ENCODE measurements at regions of chr1 and their contacts with region 1.

Region 1: GRCh38 chr1:11907275-11908094 is 18.7 kb downstream of the KIAA2013 start:
- DNase-seq: peak; percentile 94
- ATAC-seq: peak; percentile 47
- H3K4me3 Mint-ChIP-seq: peak overlapping the region; percentile 81
- H3K27ac Mint-ChIP-seq: peak overlapping the region; percentile 100
- H3K4me1 Mint-ChIP-seq: peaks cover 56% of the 10 kb centered on the region
- H3K27me3 Mint-ChIP-seq: peaks cover 5% of the 10 kb centered on the region

Region 2: DNA sequence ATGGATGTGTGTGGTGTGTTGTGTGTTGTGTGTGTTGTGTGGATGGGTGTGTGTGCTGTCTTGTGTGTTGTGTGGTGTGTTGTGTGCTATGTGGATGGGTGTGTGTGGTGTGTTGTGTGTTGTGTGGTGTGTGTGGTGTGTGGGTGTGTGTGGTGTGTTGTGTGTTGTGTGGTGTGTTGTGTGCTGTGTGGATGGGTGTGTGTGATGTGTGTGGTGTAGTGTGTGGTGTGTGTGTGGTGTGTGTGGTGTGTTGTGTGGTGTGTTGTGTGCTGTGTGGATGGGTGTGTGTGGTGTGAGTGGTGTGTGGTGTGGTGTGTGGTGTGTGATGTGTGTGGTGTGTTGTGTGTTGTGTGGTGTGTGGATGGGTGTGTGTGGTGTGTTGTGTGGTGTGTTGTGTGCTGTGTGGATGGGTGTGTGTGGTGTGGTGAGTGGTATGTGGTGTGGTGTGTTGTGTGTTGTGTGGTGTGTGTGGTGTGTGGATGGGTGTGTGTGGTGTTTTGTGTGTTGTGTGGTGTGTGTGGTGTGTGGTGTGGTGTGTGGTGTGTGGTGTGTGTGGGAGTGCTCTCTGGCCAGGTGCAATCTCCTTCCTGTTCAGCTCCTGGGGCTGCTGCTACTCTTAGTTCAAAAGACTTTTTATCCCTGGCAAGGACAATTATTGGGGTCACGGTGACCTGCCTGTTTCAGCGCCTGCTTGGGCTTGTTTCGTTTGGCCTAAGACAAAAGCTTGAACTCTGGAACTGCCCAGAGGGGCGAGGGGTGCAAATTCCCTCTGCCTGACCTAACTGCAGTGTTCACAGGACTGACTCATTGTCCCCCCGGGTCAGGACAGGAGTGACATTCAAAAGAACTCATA is 533.4 kb before region 1 on chr1:
- CTCF ChIA-PET with region 1: no interaction called
- POLR2A ChIA-PET with region 1: no interaction called
- DNase-seq: peak; percentile 37
- ATAC-seq: peak; percentile 55
- H3K4me3 Mint-ChIP-seq: no peak overlapping the region
- H3K27ac Mint-ChIP-seq: peak overlapping the region; percentile 59
- H3K4me1 Mint-ChIP-seq: peaks cover 10% of the 10 kb centered on the region
- H3K27me3 Mint-ChIP-seq: peaks cover 10% of the 10 kb centered on the region

Region 3: GRCh38 chr1:11654137-11654938 is 253.1 kb before region 1 on chr1 and contains the starts of genes FBXO2 and FBXO44:
- CTCF ChIA-PET with region 1: no interaction called
- POLR2A ChIA-PET with region 1: interaction called, 24 read pairs
- DNase-seq: peak; percentile 71
- ATAC-seq: peak; percentile 80
- H3K4me3 Mint-ChIP-seq: peak within 1 kb of the TSS; percentile 74
- H3K27ac Mint-ChIP-seq: no peak within 1 kb of the TSS
- H3K4me1 Mint-ChIP-seq: peaks cover 40% of the 10 kb centered on the region
- H3K27me3 Mint-ChIP-seq: peaks cover 2% of the 10 kb centered on the region
- total RNA-seq, gene FBXO2: 5.6 to 6.0 TPM
- total RNA-seq, gene FBXO44: 39.7 to 42.3 TPM

Region 4: GRCh38 chr1:11823366-11824137 is 83.9 kb before region 1 on chr1:
- CTCF ChIA-PET with region 1: interaction called, 4 read pairs
- POLR2A ChIA-PET with region 1: interaction called, 19 read pairs
- DNase-seq: no peak
- ATAC-seq: no peak
- H3K4me3 Mint-ChIP-seq: no peak overlapping the region
- H3K27ac Mint-ChIP-seq: no peak overlapping the region
- H3K4me1 Mint-ChIP-seq: no peaks in the 10 kb centered on the region
- H3K27me3 Mint-ChIP-seq: no peaks in the 10 kb centered on the region

Region 5: GRCh38 chr1:11893907-11894251 is 13.6 kb before region 1 on chr1:
- CTCF ChIA-PET with region 1: no interaction called
- POLR2A ChIA-PET with region 1: interaction called, 51 read pairs
- DNase-seq: peak; percentile 78
- ATAC-seq: peak; percentile 89
- H3K4me3 Mint-ChIP-seq: no peak overlapping the region
- H3K27ac Mint-ChIP-seq: no peak overlapping the region
- H3K4me1 Mint-ChIP-seq: no peaks in the 10 kb centered on the region
- H3K27me3 Mint-ChIP-seq: peaks cover 27% of the 10 kb centered on the region

Region 6: GRCh38 chr1:11979851-11980675 is 72.6 kb after region 1 on chr1 and contains the start of gene MFN2:
- CTCF ChIA-PET with region 1: interaction called, 6 read pairs
- POLR2A ChIA-PET with region 1: interaction called, 310 read pairs
- DNase-seq: peak; percentile 97
- ATAC-seq: peak; percentile 97
- H3K4me3 Mint-ChIP-seq: peak within 1 kb of the TSS; percentile 95
- H3K27ac Mint-ChIP-seq: peak within 1 kb of the TSS; percentile 98
- H3K4me1 Mint-ChIP-seq: peaks cover 37% of the 10 kb centered on the region
- H3K27me3 Mint-ChIP-seq: no peaks in the 10 kb centered on the region
- total RNA-seq, gene MFN2: 55.1 to 60.4 TPM

Region 7: GRCh38 chr1:12059722-12060464 is 152.4 kb after region 1 on chr1:
- CTCF ChIA-PET with region 1: no interaction called
- POLR2A ChIA-PET with region 1: interaction called, 95 read pairs
- DNase-seq: no peak
- ATAC-seq: no peak
- H3K4me3 Mint-ChIP-seq: no peak overlapping the region
- H3K27ac Mint-ChIP-seq: no peak overlapping the region
- H3K4me1 Mint-ChIP-seq: peaks cover 49% of the 10 kb centered on the region
- H3K27me3 Mint-ChIP-seq: peaks cover 35% of the 10 kb centered on the region

Region 8: GRCh38 chr1:12161662-12162458 is 254.4 kb after region 1 on chr1:
- CTCF ChIA-PET with region 1: no interaction called
- POLR2A ChIA-PET with region 1: interaction called, 14 read pairs
- DNase-seq: peak; percentile 91
- ATAC-seq: peak; percentile 90
- H3K4me3 Mint-ChIP-seq: peak overlapping the region; percentile 58
- H3K27ac Mint-ChIP-seq: peak overlapping the region; percentile 97
- H3K4me1 Mint-ChIP-seq: peaks cover 90% of the 10 kb centered on the region
- H3K27me3 Mint-ChIP-seq: no peaks in the 10 kb centered on the region

Measured in activated CD8-positive, alpha-beta T cell treated with anti-CD3 and anti-CD28 coated beads, Interleukin-2, amount 10 ng/mL, durations not matched to agents 7 days and 5 days (primary cell).